Activated CD4-positive, alpha-beta memory T cell treated with anti-CD3 and anti-CD28 coated beads for 36 hours (primary cell): ENCODE measurements at regions of chr6 and their contacts with region 1.

Region 1: DNA sequence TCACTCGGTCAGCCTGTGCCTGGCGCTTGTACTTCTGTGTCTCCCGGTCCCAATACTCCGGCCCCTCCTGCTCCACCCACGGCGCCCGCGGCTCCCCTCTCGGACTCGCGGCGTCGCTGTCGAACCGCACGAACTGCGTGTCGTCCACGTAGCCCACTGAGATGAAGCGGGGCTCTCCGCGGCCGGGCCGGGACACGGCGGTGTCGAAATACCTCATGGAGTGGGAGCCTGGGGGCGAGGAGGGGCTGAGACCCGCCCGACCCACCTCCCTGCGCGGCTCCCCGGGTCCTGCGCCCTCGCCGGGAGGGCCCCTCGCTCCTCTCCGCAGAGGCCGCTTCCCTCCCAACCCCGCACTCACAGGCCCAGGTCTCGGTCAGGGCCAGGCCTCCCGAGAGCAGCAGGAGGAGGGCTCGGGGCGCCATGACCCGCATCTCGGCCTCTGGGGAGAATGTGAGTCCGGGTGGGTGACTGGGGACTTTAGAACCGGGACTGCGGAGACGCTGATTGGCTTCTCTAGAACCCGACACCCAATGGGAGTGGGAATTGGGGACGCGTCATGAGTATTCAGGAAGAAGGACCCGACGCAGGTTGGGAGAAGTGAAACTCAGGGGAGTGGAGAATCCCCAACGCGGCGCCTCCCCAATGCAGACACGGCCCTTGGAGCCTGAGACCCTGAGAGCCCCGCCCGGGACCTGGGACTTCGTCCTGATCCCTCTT is at the start of gene HLA-C:
- DNase-seq: peak; percentile 95
- H3K4me3 Mint-ChIP-seq: peak within 1 kb of the TSS; percentile 95
- H3K27ac Mint-ChIP-seq: peak within 1 kb of the TSS; percentile 99
- H3K4me1 Mint-ChIP-seq: peaks cover 51% of the 10 kb centered on the region
- H3K27me3 Mint-ChIP-seq: no peaks in the 10 kb centered on the region
- total RNA-seq, gene HLA-C: 976 to 983 TPM

Region 2: DNA sequence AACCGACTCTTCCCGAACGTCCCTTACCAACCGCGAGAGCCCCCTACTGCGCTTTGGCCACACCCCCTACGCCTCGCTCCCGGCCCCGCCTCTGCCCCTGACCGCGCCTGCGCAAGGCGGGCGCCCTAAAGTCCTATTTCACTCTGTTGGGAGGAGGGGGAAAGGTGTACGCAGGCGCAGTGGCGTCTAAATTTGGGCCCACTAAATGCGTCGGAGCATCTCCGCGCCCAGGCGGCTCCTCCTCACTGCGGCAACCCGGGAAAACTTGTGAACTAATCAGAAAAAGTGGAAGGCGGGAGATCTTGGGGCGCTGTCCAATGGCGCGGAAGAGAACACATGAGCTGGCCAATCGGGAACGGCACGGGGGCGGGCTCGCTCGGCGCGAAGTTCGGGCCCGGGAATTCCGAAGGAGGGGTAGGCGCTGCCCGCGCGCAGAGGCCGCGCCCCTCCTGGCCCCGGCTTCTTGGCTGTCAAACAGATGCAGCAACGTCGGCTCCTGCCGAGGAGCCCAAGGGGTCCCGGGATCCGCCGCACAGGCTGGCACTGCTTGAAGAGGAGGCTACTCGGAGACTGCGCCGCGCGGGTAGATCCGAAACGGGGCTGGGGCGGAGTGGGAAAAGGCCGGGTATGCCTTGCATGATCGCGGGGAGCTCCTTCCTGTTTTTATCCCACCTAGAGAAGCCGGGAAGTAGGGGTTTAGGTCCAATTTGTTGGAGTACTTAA is 113.5 kb before region 1 on chr6 and contains the start of gene TCF19:
- CTCF ChIA-PET with region 1: no interaction called
- POLR2A ChIA-PET with region 1: no interaction called
- intact Hi-C with region 1: loop called (anchors 1 kb)
- DNase-seq: peak; percentile 100
- H3K4me3 Mint-ChIP-seq: peak within 1 kb of the TSS; percentile 92
- H3K27ac Mint-ChIP-seq: peak within 1 kb of the TSS; percentile 73
- H3K4me1 Mint-ChIP-seq: peaks cover 29% of the 10 kb centered on the region
- H3K27me3 Mint-ChIP-seq: peaks cover 2% of the 10 kb centered on the region
- total RNA-seq, gene TCF19: 93.0 to 93.1 TPM

Region 3: DNA sequence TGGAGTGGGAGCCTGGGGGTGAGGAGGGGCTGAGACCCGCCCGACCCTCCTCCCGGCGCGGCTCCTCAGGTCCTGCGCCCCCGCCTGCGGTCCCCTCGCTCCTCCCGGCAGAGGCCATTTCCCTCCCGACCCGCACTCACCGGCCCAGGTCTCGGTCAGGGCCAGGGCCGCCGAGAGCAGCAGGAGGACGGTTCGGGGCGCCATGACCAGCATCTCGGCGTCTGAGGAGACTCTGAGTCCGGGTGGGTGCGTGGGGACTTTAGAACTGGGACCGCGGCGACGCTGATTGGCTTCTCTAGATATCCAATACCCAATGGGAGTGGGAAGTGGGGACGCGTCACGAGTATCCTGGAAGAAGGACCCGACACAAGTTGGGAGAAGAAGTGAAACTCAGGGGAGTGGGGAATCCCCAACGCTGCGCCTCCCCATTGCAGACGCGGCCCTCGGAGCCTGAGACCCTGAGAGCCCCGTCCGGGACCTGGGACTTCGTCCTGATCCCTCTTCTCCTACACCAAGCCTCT is 85.2 kb after region 1 on chr6 and contains the start of gene HLA-B:
- CTCF ChIA-PET with region 1: no interaction called
- POLR2A ChIA-PET with region 1: interaction called, 20 read pairs
- intact Hi-C with region 1: loop called (anchors 2 kb)
- DNase-seq: peak; percentile 90
- H3K4me3 Mint-ChIP-seq: peak within 1 kb of the TSS; percentile 99
- H3K27ac Mint-ChIP-seq: peak within 1 kb of the TSS; percentile 99
- H3K4me1 Mint-ChIP-seq: peaks cover 60% of the 10 kb centered on the region
- H3K27me3 Mint-ChIP-seq: no peaks in the 10 kb centered on the region
- total RNA-seq, gene HLA-B: 3,016 to 3,060 TPM